Naive thymus-derived CD8-positive, alpha-beta T cell (primary cell): ENCODE measurements at regions of chr3 and their contacts with region 1.

Region 1: DNA sequence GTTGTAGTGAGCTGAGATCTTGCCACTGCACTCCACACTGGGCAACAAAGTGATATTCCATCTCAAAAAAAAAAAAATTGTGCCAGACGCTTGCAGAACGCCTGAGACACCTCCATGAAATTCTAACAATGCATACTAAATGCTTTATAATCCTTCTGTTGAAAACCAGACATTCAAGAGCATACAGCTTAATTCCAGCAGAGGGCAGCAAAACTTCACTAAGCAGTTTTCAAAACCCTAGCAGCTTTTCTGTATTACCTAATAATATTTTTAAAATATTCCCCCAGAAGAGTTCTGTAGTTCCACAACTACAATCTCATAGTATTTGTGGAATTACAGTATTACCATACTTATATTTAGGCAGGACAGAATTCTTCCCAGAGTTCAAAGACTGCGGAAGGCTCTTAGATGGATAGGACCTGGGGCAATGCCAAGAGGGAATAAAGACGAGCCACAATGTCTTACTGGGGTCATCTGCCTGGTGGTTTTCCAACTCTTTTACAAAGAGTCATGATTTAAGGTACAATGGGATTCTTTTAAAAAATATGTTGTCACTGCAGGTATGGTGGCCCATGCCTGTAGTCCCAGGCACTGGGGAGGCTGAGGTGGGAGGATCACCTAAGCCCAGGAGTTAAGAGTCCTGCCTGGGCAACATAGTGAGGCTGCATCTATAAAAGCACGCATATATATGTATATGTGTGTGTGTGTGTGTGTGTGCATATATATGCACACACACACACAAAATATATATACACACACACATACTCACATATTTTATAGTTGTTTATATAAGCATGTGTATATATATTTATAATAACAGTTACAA is 19.6 kb upstream of the TASOR start:
- DNase-seq: peak in 9 of 10 donors; percentile 34 to 75 (median 57)
- ATAC-seq: peak; percentile 76 to 79
- H3K4me3 Mint-ChIP-seq: no peak overlapping the region
- H3K27ac Mint-ChIP-seq: peak overlapping the region in 5 of 10 donors; percentile 8 to 46 (median 20)
- H3K4me1 Mint-ChIP-seq: peaks cover 18 to 31% (median 27%) of the 10 kb centered on the region in 4 donors
- H3K27me3 Mint-ChIP-seq: no peaks in the 10 kb centered on the region

Region 2: GRCh38 chr3:56988458-56989168 is 285.9 kb after region 1 on chr3:
- POLR2A ChIA-PET with region 1: interaction called, 37 read pairs
- DNase-seq: peak; percentile 39 to 82 (median 68)
- ATAC-seq: peak; percentile 72 to 87
- H3K4me3 Mint-ChIP-seq: peak overlapping the region in 1 of 10 donors; percentile 52
- H3K27ac Mint-ChIP-seq: peak overlapping the region in 4 of 10 donors; percentile 46 to 75 (median 62)
- H3K4me1 Mint-ChIP-seq: peaks cover 11 to 17% (median 13%) of the 10 kb centered on the region in 4 donors
- H3K27me3 Mint-ChIP-seq: peaks cover 0 to 9% (median 6%) of the 10 kb centered on the region in 5 donors